Naive thymus-derived CD4-positive, alpha-beta T cell (primary cell): ENCODE measurements at regions of chrX and their contacts with region 1.

Region 1: DNA sequence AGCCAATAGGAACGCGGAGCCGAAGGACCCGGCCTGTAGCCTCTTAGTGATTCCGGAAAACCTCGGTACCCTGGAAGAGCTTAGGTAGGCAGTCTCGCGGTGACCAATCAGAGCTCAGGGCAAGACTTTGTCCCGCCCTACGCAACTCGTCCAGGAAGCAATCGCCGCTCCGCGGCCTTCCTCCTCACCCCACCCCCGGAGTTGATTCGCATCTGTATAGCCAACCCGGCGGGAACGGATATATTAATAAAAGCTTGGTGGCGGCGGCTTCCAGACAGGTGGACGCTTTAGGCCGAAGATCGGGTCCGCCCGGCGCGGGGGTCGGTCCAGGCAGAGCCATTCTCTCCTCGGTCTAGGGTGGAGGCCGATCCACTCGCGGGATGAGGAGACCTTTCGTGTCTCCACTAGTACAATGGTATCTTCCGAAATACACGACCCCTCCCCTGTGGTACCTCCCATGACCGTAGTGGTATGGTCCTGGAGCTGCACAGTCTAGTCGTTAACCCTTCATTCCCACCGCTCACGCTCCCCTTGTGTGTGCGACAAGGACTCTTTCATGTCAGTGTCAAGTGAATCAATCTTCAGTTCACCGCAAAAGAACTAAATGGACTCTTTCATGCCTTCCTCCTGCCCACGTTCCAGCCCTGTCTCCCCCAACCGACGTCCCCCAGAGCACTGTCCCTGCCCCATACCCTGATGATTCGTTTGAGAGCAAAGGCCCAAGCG is 24.2 kb upstream of the GLOD5 start:
- DNase-seq: peak; percentile 55 to 94 (median 89)
- ATAC-seq: peak; percentile 98
- H3K4me3 ChIP-seq: peak overlapping the region; percentile 81
- H3K4me3 Mint-ChIP-seq: peak overlapping the region; percentile 79 to 98 (median 94)
- H3K27ac ChIP-seq: peak overlapping the region; percentile 91
- H3K27ac Mint-ChIP-seq: peak overlapping the region; percentile 90 to 99 (median 96)
- H3K4me1 ChIP-seq: peaks cover 12 to 14% of the 10 kb centered on the region in 2 donors
- H3K4me1 Mint-ChIP-seq: peaks cover 8 to 31% (median 24%) of the 10 kb centered on the region in 7 donors
- H3K27me3 ChIP-seq: no peaks in the 10 kb centered on the region
- H3K27me3 Mint-ChIP-seq: no peaks in the 10 kb centered on the region

Region 2: DNA sequence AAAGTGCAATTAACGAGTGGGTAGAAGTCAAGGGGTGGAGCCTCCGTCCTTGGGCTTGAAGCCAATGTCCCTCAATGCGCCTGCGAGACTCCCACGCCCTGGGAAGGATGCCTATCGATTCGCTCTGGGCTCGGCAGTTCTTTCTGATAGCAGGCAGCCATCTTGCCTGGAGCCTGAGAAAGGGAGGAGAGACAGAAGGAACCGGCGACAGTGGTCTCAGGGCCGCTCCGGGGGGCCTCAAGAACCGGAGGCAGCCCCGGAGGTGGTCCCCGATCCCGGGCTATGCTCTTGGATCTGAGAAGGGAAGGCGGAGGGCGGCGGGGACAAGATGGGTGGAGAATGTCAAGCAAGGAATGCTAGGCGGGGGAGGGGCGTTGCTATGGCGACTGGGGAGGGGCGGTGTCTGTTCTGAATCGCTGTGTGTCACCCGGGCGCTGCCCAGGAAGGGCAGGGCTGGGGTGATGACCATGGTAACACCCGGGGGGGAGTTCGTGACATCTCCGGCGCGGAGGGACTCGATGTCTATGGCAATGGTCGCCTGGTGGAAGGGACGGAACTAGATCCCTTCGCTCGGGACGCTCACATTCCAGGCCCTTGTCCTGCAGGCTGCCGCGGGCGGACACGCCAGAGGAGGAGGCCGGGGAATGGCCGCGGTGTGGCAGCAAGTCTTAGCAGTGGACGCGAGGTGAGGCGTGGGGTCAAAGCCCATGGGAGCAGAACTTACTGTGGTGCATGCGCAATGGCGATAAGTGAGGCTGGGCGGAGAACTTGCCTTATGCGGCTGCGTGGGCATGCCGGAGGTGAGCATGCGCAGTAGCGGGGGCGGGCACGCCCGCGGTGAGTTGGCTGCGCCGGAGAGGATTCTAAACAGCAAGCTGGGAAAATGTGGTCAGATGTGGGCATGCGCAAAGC is 139.8 kb before region 1 on chrX and contains the start of gene WDR13:
- CTCF ChIA-PET with region 1: no interaction called
- POLR2A ChIA-PET with region 1: no interaction called
- intact Hi-C with region 1: loop called in 1 of 2 experiments (anchors 1 kb)
- DNase-seq: peak; percentile 77 to 93 (median 91)
- ATAC-seq: peak; percentile 93
- H3K4me3 ChIP-seq: peak within 1 kb of the TSS; percentile 98
- H3K4me3 Mint-ChIP-seq: peak within 1 kb of the TSS; percentile 81 to 99 (median 96)
- H3K27ac ChIP-seq: peak within 1 kb of the TSS; percentile 94
- H3K27ac Mint-ChIP-seq: peak within 1 kb of the TSS; percentile 98 to 100 (median 99)
- H3K4me1 ChIP-seq: peaks cover 0 to 8% of the 10 kb centered on the region in 2 donors
- H3K4me1 Mint-ChIP-seq: peaks cover 4 to 16% (median 11%) of the 10 kb centered on the region in 7 donors
- H3K27me3 ChIP-seq: no peaks in the 10 kb centered on the region
- H3K27me3 Mint-ChIP-seq: peaks cover 0 to 2% (median 0%) of the 10 kb centered on the region in 5 donors
- total RNA-seq, gene WDR13: 44.8 to 66.9 (median 54.4) TPM

Region 3: DNA sequence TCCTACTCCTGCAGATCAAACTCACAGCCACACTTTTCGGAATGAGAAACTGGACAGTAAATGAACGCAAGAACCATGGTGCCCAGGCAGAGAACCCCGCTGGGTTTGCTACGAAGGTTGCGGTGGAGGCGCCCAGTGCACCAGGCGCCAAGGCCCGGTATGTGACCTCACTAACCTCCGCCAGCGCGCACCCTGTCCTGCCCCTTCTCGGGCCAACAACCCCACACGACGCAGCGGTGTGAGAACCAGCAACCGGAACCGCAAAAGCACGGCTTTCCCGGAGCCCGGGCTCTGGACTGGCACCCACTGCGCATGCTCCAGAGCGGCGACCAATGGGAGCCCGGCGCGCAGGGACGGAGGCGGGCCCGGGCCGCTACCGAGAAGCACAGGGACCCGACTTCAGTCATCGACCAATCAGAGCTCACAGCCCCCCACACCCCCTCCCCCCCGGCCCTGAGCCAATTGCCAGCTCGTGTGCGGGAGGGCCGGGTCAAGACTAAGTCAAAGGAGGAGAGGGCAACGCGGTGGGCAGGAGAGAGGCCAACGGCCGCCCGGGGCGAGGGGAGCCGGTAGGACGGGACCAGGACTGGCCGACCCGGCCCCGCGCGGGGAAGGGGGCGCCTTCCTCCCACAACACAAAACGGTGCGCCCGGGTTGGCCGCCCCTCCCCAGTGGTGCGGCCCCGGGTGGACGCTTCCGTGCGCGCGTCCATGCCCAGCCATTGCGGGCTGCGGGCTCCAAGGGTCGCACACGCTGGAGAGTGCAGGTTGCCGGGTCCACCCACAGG is 61.1 kb before region 1 on chrX:
- CTCF ChIA-PET with region 1: no interaction called
- POLR2A ChIA-PET with region 1: interaction called, 10 read pairs
- intact Hi-C with region 1: loop called (anchors 1 to 2 kb)
- DNase-seq: peak; percentile 74 to 89 (median 88)
- ATAC-seq: peak; percentile 98
- H3K4me3 ChIP-seq: peak overlapping the region; percentile 77
- H3K4me3 Mint-ChIP-seq: peak overlapping the region; percentile 88 to 94 (median 92)
- H3K27ac ChIP-seq: peak overlapping the region; percentile 90
- H3K27ac Mint-ChIP-seq: peak overlapping the region; percentile 82 to 95 (median 90)
- H3K4me1 ChIP-seq: no peaks in the 10 kb centered on the region
- H3K4me1 Mint-ChIP-seq: peaks cover 6 to 26% (median 22%) of the 10 kb centered on the region in 7 donors
- H3K27me3 ChIP-seq: no peaks in the 10 kb centered on the region
- H3K27me3 Mint-ChIP-seq: no peaks in the 10 kb centered on the region

Region 4: DNA sequence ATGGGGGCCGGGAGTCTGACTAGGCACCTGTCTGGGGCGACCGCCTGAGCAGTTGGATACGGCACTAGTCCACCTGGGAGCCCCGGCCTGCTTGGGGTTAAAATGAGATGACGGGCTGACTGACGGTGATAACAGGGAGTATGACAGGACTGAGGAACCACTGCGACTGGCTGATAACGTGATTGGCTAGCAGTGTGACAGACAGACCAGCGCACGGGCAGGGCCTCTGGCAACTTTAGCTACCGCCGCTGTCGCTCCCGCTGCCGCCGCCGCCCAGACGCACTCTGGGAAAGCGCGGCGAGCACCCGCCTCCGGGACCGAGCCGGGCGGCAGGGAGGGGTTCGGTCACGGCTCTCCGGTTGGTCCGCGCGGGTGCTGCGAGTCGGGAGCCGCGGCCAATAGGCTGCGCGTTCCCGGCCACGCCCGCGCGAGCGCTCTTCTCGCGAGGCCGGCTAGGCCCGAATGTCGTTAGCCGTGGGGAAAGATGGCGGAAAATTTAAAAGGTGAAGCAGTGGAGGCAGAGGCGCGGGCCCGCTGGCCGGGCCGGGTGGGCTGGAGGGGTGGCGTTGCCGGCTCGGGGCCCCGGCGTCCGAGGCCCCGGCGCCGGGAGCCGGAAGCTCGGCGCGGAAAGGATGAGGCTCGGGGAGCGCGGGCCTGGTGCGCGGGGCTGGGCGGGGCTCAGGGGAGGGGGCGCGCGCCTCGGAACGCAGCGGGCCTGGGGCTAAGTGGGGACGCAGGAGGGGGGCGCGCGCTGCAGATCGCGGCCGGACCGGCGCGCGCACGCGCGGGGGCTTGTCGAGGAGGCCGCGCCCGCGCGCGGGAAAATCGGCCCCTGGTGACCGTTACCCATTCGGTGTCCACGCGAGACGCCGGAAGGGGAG is 40.8 kb before region 1 on chrX and contains the start of gene SUV39H1:
- CTCF ChIA-PET with region 1: no interaction called
- POLR2A ChIA-PET with region 1: interaction called, 50 read pairs
- intact Hi-C with region 1: loop called (anchors 1 kb)
- DNase-seq: peak; percentile 76 to 90 (median 85)
- ATAC-seq: peak; percentile 97
- H3K4me3 ChIP-seq: peak within 1 kb of the TSS; percentile 62
- H3K4me3 Mint-ChIP-seq: peak within 1 kb of the TSS; percentile 86 to 95 (median 90)
- H3K27ac ChIP-seq: peak within 1 kb of the TSS; percentile 82
- H3K27ac Mint-ChIP-seq: peak within 1 kb of the TSS; percentile 91 to 96 (median 95)
- H3K4me1 ChIP-seq: peaks cover 0 to 13% of the 10 kb centered on the region in 2 donors
- H3K4me1 Mint-ChIP-seq: peaks cover 6 to 39% (median 28%) of the 10 kb centered on the region in 7 donors
- H3K27me3 ChIP-seq: no peaks in the 10 kb centered on the region
- H3K27me3 Mint-ChIP-seq: no peaks in the 10 kb centered on the region
- total RNA-seq, gene SUV39H1: 4.6 to 23.3 (median 8.6) TPM

Region 5: GRCh38 chrX:48726596-48726995 is 10.8 kb before region 1 on chrX:
- CTCF ChIA-PET with region 1: interaction called, 4 read pairs
- POLR2A ChIA-PET with region 1: interaction called, 11 read pairs
- intact Hi-C with region 1: no loop called
- DNase-seq: peak in 5 of 9 donors; percentile 24 to 52 (median 40)
- ATAC-seq: peak; percentile 65
- H3K4me3 ChIP-seq: no peak overlapping the region
- H3K4me3 Mint-ChIP-seq: peak overlapping the region in 7 of 10 donors; percentile 7 to 49 (median 22)
- H3K27ac ChIP-seq: no peak overlapping the region
- H3K27ac Mint-ChIP-seq: peak overlapping the region in 8 of 9 donors; percentile 1 to 82 (median 76)
- H3K4me1 ChIP-seq: peaks cover 11 to 17% of the 10 kb centered on the region in 2 donors
- H3K4me1 Mint-ChIP-seq: peaks cover 17 to 49% (median 40%) of the 10 kb centered on the region in 7 donors
- H3K27me3 ChIP-seq: no peaks in the 10 kb centered on the region
- H3K27me3 Mint-ChIP-seq: no peaks in the 10 kb centered on the region

Region 6: DNA sequence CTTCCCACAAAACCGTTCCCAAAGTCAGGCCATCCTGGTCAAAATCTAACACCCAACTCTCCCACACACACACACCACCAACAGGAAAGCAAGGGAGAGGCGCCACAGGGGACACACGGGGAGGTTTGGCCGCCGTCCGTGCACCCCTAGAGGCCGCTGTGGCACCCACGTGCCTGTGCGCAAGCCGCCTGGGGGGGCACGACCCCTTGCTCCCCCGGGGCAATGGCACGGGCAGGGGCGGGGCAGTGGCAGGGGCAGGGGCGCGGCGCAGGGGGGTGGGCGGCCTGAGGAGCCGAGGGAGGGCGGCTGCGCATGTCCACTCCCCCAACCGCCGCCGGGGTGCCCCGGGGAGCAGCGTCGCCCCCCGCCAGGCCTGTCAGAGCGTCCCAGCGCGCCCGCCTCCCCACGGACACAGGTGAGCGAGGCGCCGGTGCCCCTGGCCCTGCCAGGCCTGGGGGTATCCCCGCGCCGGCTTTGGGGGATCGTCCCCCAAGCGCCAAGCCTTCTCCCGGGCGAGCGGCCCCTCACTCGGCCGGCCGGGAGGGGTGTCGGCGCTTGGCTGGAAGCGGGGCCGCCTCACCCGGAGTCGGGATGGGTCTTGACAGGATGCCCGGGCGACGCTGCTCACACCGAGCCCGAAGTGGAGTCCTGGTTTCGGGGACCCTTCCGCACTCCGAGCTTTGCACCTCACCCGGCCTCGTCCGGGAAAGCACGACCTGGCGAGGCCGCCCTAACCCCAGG is 88.9 kb after region 1 on chrX and contains the start of gene ERAS:
- CTCF ChIA-PET with region 1: no interaction called
- POLR2A ChIA-PET with region 1: no interaction called
- intact Hi-C with region 1: no loop called
- DNase-seq: no peak
- ATAC-seq: peak; percentile 59
- H3K4me3 ChIP-seq: no peak within 1 kb of the TSS
- H3K4me3 Mint-ChIP-seq: peak within 1 kb of the TSS in 9 of 10 donors; percentile 5 to 78 (median 57)
- H3K27ac ChIP-seq: no peak within 1 kb of the TSS
- H3K27ac Mint-ChIP-seq: peak within 1 kb of the TSS in 1 of 9 donors; percentile 67
- H3K4me1 ChIP-seq: no peaks in the 10 kb centered on the region
- H3K4me1 Mint-ChIP-seq: peaks cover 0 to 9% (median 3%) of the 10 kb centered on the region in 7 donors
- H3K27me3 ChIP-seq: no peaks in the 10 kb centered on the region
- H3K27me3 Mint-ChIP-seq: peaks cover 19 to 33% (median 21%) of the 10 kb centered on the region in 5 donors
- total RNA-seq, gene ERAS: not detected

Region 7: GRCh38 chrX:48897621-48898306 is 160.4 kb after region 1 on chrX and contains the starts of genes PQBP1 and TIMM17B:
- CTCF ChIA-PET with region 1: no interaction called
- POLR2A ChIA-PET with region 1: no interaction called
- intact Hi-C with region 1: loop called (anchors 1 kb)
- DNase-seq: peak; percentile 71 to 93 (median 89)
- ATAC-seq: peak; percentile 92
- H3K4me3 ChIP-seq: peak within 1 kb of the TSS; percentile 91
- H3K4me3 Mint-ChIP-seq: peak within 1 kb of the TSS; percentile 83 to 100 (median 91)
- H3K27ac ChIP-seq: peak within 1 kb of the TSS; percentile 98
- H3K27ac Mint-ChIP-seq: peak within 1 kb of the TSS; percentile 89 to 98 (median 94)
- H3K4me1 ChIP-seq: peaks cover 12 to 16% of the 10 kb centered on the region in 2 donors
- H3K4me1 Mint-ChIP-seq: peaks cover 6 to 42% (median 24%) of the 10 kb centered on the region in 7 donors
- H3K27me3 ChIP-seq: no peaks in the 10 kb centered on the region
- H3K27me3 Mint-ChIP-seq: no peaks in the 10 kb centered on the region
- total RNA-seq, gene PQBP1: 64.1 to 89.5 (median 74.6) TPM
- total RNA-seq, gene TIMM17B: 41.1 to 46.6 (median 44.2) TPM

Region 8: DNA sequence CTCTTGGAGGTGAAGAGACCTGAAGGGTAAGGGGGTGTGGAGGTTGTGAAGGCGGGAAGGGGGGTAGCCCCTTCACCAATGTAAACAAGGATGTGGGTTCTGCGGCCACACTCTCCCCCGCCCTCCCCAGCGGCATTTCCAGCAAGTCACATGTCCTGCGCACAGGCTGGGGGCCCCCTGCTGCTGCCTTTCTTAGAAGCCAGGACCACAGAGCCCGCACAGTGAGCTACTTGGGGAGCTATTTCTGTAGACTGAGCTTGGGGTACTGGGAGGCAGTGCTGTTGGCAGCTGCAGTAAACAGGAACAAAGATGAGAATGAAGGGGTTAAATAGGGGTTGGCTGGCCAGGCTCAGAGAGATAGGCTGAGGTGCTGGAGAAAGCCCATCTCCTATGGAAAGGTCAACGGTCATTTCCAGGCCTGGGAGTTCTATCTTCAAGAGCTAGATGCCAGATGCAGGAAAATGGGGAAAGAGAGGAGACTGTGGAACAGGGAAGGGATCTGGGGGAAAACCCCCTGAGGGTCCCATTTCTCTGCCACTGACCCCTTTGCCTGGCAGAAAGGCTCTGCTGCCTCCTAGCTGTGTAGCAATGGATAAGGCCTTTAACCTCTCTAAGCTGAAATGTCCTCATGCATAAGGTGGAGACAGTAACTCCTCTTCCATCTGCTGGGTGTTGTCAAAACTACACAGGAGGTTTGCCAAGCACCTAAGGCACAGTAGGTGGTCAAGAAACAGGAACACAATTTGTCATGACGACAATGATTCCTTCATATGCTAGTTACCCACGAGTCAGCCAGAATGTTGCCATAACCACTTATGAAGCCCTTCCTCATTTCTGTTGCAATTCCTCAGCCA is 199.9 kb after region 1 on chrX:
- CTCF ChIA-PET with region 1: interaction called, 7 read pairs
- POLR2A ChIA-PET with region 1: no interaction called
- intact Hi-C with region 1: loop called in 1 of 2 experiments (anchors 5 kb)
- DNase-seq: peak; percentile 59 to 96 (median 92)
- ATAC-seq: peak; percentile 75
- H3K4me3 ChIP-seq: peak overlapping the region; percentile 70
- H3K4me3 Mint-ChIP-seq: peak overlapping the region; percentile 78 to 96 (median 88)
- H3K27ac ChIP-seq: peak overlapping the region; percentile 97
- H3K27ac Mint-ChIP-seq: peak overlapping the region; percentile 96 to 99 (median 99)
- H3K4me1 ChIP-seq: peaks cover 69 to 80% of the 10 kb centered on the region in 2 donors
- H3K4me1 Mint-ChIP-seq: peaks cover 36 to 91% (median 80%) of the 10 kb centered on the region in 7 donors
- H3K27me3 ChIP-seq: no peaks in the 10 kb centered on the region
- H3K27me3 Mint-ChIP-seq: peaks cover 0 to 3% (median 0%) of the 10 kb centered on the region in 5 donors